ENCODE measurements at regions of chr19 and their contacts with region 1.

Region 1: GRCh38 chr19:38280030-38280921 is 15.9 kb downstream of the SPINT2 start:
- DNase-seq: peak; percentile 79
- H3K4me3 ChIP-seq: no peak overlapping the region
- H3K27ac ChIP-seq: peak overlapping the region; percentile 69
- H3K4me1 ChIP-seq: peaks cover 52% of the 10 kb centered on the region
- H3K27me3 ChIP-seq: no peaks in the 10 kb centered on the region
- CTCF ChIP-seq: no peak

Region 2: DNA sequence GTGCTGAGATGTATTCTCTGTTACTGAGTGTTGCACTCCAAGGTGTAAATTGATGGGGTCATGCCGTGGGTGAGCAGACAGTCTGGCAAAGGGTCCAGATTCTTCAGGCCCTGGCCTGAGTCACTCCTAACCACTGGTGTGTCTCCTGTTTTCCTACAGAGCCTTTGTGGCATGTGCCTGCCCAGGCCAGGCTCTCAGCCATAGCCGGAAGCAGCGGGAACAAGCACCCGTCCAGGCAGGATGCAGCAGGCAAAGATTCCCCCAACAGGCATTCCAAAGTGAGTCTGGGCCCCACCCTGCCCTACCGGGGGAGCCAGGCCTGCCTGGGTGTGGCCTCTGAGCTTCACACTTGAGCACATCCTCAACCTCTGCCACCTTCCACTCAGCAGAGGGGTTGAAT is 118.2 kb before region 1 on chr19:
- CTCF ChIA-PET with region 1: no interaction called
- dilution Hi-C with region 1: no loop called
- in situ Hi-C with region 1: no loop called
- intact Hi-C with region 1: no loop called
- DNase-seq: peak; percentile 87
- H3K4me3 ChIP-seq: no peak overlapping the region
- H3K27ac ChIP-seq: peak overlapping the region; percentile 42
- H3K4me1 ChIP-seq: peaks cover 13% of the 10 kb centered on the region
- H3K27me3 ChIP-seq: no peaks in the 10 kb centered on the region
- CTCF ChIP-seq: no peak

Region 3: GRCh38 chr19:38263689-38264485 is 16.4 kb before region 1 on chr19:
- CTCF ChIA-PET with region 1: interaction called, 3 read pairs
- dilution Hi-C with region 1: no loop called
- in situ Hi-C with region 1: no loop called
- intact Hi-C with region 1: loop called (anchors 1 kb)
- DNase-seq: peak; percentile 95
- H3K4me3 ChIP-seq: peak overlapping the region in 2 of 3 experiments; percentile 7 to 83
- H3K27ac ChIP-seq: peak overlapping the region; percentile 90
- H3K4me1 ChIP-seq: peaks cover 28% of the 10 kb centered on the region
- H3K27me3 ChIP-seq: no peaks in the 10 kb centered on the region
- CTCF ChIP-seq: no peak

Region 4: DNA sequence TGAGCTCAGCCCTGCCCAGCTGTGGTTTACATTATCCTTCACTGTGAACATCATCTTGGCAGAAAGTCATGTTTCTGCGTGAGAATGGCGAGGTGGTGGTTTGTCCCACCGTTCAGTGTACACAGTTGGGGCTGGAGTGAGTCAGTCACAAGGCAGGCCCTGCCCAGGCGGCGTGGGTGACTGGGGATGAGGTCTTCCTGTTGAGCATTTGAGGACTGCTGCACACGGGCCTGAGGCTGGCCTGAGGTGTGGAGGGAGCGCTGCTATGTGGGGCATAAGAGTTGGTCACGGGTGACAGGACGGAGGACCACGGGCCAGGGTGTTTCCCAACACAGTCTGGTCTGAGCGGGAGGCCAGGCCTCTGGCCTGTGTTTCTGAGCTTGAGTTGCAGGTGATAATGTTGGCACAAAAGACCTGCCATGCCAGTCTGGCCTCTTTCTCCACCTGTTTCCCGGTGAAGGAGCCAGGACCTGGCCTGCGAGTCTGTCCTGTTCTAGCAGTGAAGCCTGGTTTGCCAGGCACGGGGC is 10.4 kb after region 1 on chr19:
- CTCF ChIA-PET with region 1: no interaction called
- dilution Hi-C with region 1: no loop called
- in situ Hi-C with region 1: no loop called
- intact Hi-C with region 1: loop called (anchors 1 kb)
- DNase-seq: peak; percentile 93
- H3K4me3 ChIP-seq: no peak overlapping the region
- H3K27ac ChIP-seq: peak overlapping the region; percentile 50
- H3K4me1 ChIP-seq: peaks cover 45% of the 10 kb centered on the region
- H3K27me3 ChIP-seq: no peaks in the 10 kb centered on the region
- CTCF ChIP-seq: no peak